Astrocyte of the cerebellum (primary cell): ENCODE measurements at regions of chr9 and their contacts with region 1.

Region 1: DNA sequence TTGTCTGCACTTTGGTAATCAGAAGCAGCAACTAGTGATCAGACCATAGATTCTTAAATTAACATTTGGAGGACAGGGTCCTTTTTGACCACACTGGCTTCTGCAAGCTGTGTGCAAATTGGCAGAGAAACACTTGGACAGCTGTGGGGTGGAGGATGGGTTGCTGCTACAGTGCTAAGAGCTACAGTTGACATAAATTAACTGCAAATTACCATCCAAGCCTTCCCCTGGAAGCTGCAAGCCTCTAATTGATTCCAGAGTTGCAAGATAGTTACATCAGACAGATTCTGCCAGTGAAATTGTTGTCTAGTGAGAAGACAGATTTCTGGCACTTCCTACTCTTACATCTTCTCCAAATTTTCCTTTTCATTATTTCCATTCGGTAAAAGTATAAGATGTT is 517.7 kb downstream of the DIRAS2 start:
- DNase-seq: no peak
- H3K4me3 ChIP-seq: no peak overlapping the region
- CTCF ChIP-seq: no peak

Region 2: GRCh38 chr9:90870621-90871326 is 745.8 kb after region 1 on chr9:
- in situ Hi-C with region 1: loop called (anchors 10 kb)
- DNase-seq: peak; percentile 18
- H3K4me3 ChIP-seq: no peak overlapping the region
- CTCF ChIP-seq: peak; percentile 92